K562 (cell line): ENCODE measurements at regions of chr6 and their contacts with region 1.

Region 1: GRCh38 chr6:68756454-68757375 is 121.6 kb downstream of the ADGRB3 start:
- DNase-seq: no peak
- ATAC-seq: peak; percentile 16; the same call in 2 of the 3 replicates
- H3K4me3 ChIP-seq: no peak overlapping the region
- H3K27ac ChIP-seq: peak overlapping the region; percentile 31; the same call in 1 of the 3 replicates
- H3K4me1 ChIP-seq: peaks cover 0 to 19% of the 10 kb centered on the region in 2 experiments; a peak in 2 of 5 replicates
- H3K27me3 ChIP-seq: no peaks in the 10 kb centered on the region
- CTCF ChIP-seq: no peak
- EP300 ChIP-seq: no peak
- POLR2A ChIP-seq: no peak
- RAD21 ChIP-seq: no peak

Region 2: GRCh38 chr6:68114463-68115047 is 642.2 kb before region 1 on chr6:
- CTCF ChIA-PET with region 1: no interaction called
- POLR2A ChIA-PET with region 1: no interaction called
- in situ Hi-C with region 1: no loop called
- intact Hi-C with region 1: no loop called
- DNase-seq: no peak
- ATAC-seq: no peak
- H3K4me3 ChIP-seq: no peak overlapping the region
- H3K27ac ChIP-seq: no peak overlapping the region
- H3K4me1 ChIP-seq: no peaks in the 10 kb centered on the region
- H3K27me3 ChIP-seq: no peaks in the 10 kb centered on the region
- CTCF ChIP-seq: no peak
- EP300 ChIP-seq: no peak
- POLR2A ChIP-seq: no peak
- RAD21 ChIP-seq: no peak

Region 3: DNA sequence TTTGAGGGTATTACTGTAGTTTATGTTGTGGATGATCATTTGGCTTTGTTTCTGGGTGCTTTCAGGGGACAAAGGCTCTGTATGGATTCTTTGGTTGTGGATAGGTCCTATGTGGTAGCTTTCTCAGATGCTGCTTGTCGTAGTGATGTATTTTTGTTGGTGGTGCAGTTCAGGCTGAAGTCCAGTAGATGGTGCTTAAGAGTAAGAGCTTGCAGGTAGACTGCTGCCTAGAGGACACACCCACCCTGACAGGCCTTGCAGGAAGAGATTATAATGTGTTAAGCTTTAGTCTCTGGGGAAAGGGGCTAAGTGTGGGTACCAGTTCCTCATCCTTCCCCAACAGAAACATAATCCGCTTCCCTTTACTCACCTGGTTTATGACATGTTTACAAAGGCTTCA is 184.2 kb before region 1 on chr6:
- CTCF ChIA-PET with region 1: no interaction called
- POLR2A ChIA-PET with region 1: no interaction called
- in situ Hi-C with region 1: no loop called
- intact Hi-C with region 1: loop called (anchors 1 kb)
- DNase-seq: peak; percentile 51 to 83 (median 62)
- ATAC-seq: peak; percentile 92
- H3K4me3 ChIP-seq: no peak overlapping the region
- H3K27ac ChIP-seq: no peak overlapping the region
- H3K4me1 ChIP-seq: no peaks in the 10 kb centered on the region
- H3K27me3 ChIP-seq: no peaks in the 10 kb centered on the region
- CTCF ChIP-seq: peak; percentile 80 to 95 (median 94)
- EP300 ChIP-seq: no peak
- POLR2A ChIP-seq: no peak
- RAD21 ChIP-seq: peak; percentile 76 to 89

Region 4: GRCh38 chr6:68695838-68696237 is 60.9 kb before region 1 on chr6:
- CTCF ChIA-PET with region 1: no interaction called
- POLR2A ChIA-PET with region 1: no interaction called
- in situ Hi-C with region 1: no loop called
- intact Hi-C with region 1: loop called (anchors 5 kb)
- DNase-seq: peak in 2 of 4 experiments; percentile 51 to 87
- ATAC-seq: peak; percentile 69
- H3K4me3 ChIP-seq: peak overlapping the region; percentile 4; the same call in 1 of the 2 replicates
- H3K27ac ChIP-seq: peak overlapping the region; percentile 81
- H3K4me1 ChIP-seq: peaks cover 0 to 22% of the 10 kb centered on the region in 2 experiments; a peak in 3 of 5 replicates
- H3K27me3 ChIP-seq: no peaks in the 10 kb centered on the region
- CTCF ChIP-seq: no peak
- EP300 ChIP-seq: no peak; the same call in 1 of the 2 replicates
- POLR2A ChIP-seq: no peak
- RAD21 ChIP-seq: no peak

Region 5: DNA sequence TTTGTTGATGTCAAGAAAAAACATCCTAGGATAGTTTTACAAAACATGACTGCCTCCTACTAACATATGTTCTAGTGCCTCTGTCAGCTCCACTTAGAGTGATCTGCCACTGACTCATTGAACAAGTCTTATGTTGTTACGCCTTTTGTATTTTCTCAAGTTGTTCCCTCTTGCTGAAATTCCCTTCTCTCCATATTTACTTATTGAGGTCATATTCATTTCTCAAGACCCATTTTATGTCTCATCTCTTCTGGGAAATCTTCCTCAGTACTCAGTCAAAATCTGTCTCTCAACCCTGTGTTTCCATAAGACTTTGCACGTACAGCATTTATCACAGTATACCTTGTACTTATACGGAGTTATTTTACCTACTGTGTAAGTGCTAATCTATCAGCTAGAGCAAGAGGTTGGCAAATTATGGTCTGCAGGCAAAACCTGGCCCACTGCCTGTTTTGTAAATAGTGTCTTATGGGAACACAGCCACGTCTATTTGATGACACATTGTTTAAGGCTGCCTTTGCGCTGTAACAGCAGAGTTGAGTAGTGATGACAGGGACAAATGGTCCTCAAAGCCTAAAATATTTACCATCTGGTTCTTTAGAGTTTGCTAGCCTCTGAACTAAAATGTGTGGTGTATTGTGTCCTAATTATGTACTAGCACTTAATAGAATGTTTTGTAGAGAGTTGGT is 38.2 kb before region 1 on chr6:
- CTCF ChIA-PET with region 1: no interaction called
- POLR2A ChIA-PET with region 1: no interaction called
- in situ Hi-C with region 1: no loop called
- intact Hi-C with region 1: no loop called
- DNase-seq: peak in 1 of 4 experiments; percentile 65
- ATAC-seq: peak; percentile 83
- H3K4me3 ChIP-seq: no peak overlapping the region
- H3K27ac ChIP-seq: peak overlapping the region; percentile 54; the same call in 2 of the 3 replicates
- H3K4me1 ChIP-seq: peaks cover 4 to 28% of the 10 kb centered on the region in 2 experiments; a peak in 3 of 5 replicates
- H3K27me3 ChIP-seq: no peaks in the 10 kb centered on the region
- CTCF ChIP-seq: no peak
- EP300 ChIP-seq: no peak
- POLR2A ChIP-seq: no peak
- RAD21 ChIP-seq: no peak

Region 6: GRCh38 chr6:68740828-68741500 is 15.8 kb before region 1 on chr6:
- CTCF ChIA-PET with region 1: no interaction called
- POLR2A ChIA-PET with region 1: interaction called, 4 read pairs
- in situ Hi-C with region 1: no loop called
- intact Hi-C with region 1: loop called (anchors 2 kb)
- DNase-seq: peak in 3 of 4 experiments; percentile 17 to 82 (median 68)
- ATAC-seq: peak; percentile 78
- H3K4me3 ChIP-seq: no peak overlapping the region
- H3K27ac ChIP-seq: peak overlapping the region; percentile 91
- H3K4me1 ChIP-seq: peaks cover 6 to 51% of the 10 kb centered on the region in 2 experiments; a peak in 4 of 5 replicates
- H3K27me3 ChIP-seq: no peaks in the 10 kb centered on the region
- CTCF ChIP-seq: no peak
- EP300 ChIP-seq: peak; percentile 86
- POLR2A ChIP-seq: no peak
- RAD21 ChIP-seq: peak in 1 of 2 experiments; percentile 24; a peak in 1 of 4 replicates

Region 7: GRCh38 chr6:68876792-68877493 is 120.2 kb after region 1 on chr6:
- CTCF ChIA-PET with region 1: no interaction called
- POLR2A ChIA-PET with region 1: no interaction called
- in situ Hi-C with region 1: no loop called
- intact Hi-C with region 1: no loop called
- DNase-seq: peak in 2 of 4 experiments; percentile 15 to 39
- ATAC-seq: no peak; the same call in 2 of the 3 replicates
- H3K4me3 ChIP-seq: no peak overlapping the region
- H3K27ac ChIP-seq: no peak overlapping the region
- H3K4me1 ChIP-seq: no peaks in the 10 kb centered on the region
- H3K27me3 ChIP-seq: no peaks in the 10 kb centered on the region
- CTCF ChIP-seq: peak in 1 of 3 experiments; percentile 59; a peak in 2 of 6 replicates
- EP300 ChIP-seq: no peak
- POLR2A ChIP-seq: no peak
- RAD21 ChIP-seq: peak; percentile 43 to 58

Region 8: DNA sequence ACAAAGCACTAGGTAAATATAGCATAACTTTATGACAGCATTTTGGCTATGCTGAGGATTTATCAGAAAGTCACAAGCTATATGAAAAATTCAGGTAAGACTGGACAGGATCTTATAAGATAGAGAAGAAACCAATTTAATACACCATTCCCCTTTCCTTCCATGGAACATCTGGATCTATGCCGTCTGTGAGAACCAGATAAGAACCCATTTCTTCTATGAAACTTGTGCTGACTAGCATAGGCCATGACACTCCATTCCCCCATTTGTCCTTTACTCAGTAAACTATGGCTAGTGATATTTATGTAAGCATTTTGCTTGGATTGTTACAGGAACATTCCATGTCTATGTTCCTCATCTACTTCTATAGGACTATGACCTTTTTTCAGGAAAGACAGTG is 316.1 kb after region 1 on chr6:
- CTCF ChIA-PET with region 1: no interaction called
- POLR2A ChIA-PET with region 1: no interaction called
- in situ Hi-C with region 1: no loop called
- intact Hi-C with region 1: no loop called
- DNase-seq: peak in 2 of 4 experiments; percentile 7 to 24
- ATAC-seq: peak; percentile 64
- H3K4me3 ChIP-seq: no peak overlapping the region
- H3K27ac ChIP-seq: no peak overlapping the region
- H3K4me1 ChIP-seq: peaks cover 3% of the 10 kb centered on the region in 2 experiments; a peak in 1 of 5 replicates
- H3K27me3 ChIP-seq: no peaks in the 10 kb centered on the region
- CTCF ChIP-seq: no peak
- EP300 ChIP-seq: no peak
- POLR2A ChIP-seq: no peak
- RAD21 ChIP-seq: no peak